Caco-2 (cell line): ENCODE measurements at regions of chr2 and their contacts with region 1.

Region 1: GRCh38 chr2:72745679-72746368 is 80.0 kb downstream of the EXOC6B start:
- DNase-seq: peak in 1 of 2 experiments; percentile 66
- H3K4me3 ChIP-seq: no peak overlapping the region
- H3K4me3 Mint-ChIP-seq: no peak overlapping the region
- H3K27ac Mint-ChIP-seq: no peak overlapping the region
- H3K4me1 ChIP-seq: peaks cover 18% of the 10 kb centered on the region
- H3K4me1 Mint-ChIP-seq: no peaks in the 10 kb centered on the region
- H3K27me3 ChIP-seq: no peaks in the 10 kb centered on the region
- H3K27me3 Mint-ChIP-seq: no peaks in the 10 kb centered on the region
- CTCF ChIP-seq: peak; percentile 73 to 77

Region 2: DNA sequence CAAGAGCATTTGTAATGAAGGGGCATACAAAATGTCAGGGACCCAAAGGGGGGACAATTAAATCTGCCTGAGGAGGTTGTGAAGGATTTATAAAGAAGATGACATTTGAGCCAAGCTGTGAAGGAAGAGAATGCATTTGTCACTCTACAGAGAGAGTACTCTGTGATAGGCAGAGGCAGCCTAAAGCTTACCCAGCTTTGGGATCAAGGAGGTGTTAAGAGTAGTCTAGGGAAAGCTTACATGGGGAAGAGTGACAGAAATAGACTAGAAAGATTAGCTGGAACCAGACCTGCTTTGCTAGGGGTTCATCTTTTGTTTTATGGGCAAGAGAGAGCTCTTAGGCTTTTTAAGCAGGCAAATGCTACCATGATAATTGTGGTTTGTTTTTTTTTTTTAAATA is 429.1 kb before region 1 on chr2:
- CTCF ChIA-PET with region 1: no interaction called
- POLR2A ChIA-PET with region 1: no interaction called
- intact Hi-C with region 1: loop called (anchors 5 kb)
- DNase-seq: no peak
- H3K4me3 ChIP-seq: no peak overlapping the region
- H3K4me3 Mint-ChIP-seq: no peak overlapping the region
- H3K27ac Mint-ChIP-seq: no peak overlapping the region
- H3K4me1 ChIP-seq: no peaks in the 10 kb centered on the region
- H3K4me1 Mint-ChIP-seq: no peaks in the 10 kb centered on the region
- H3K27me3 ChIP-seq: no peaks in the 10 kb centered on the region
- H3K27me3 Mint-ChIP-seq: no peaks in the 10 kb centered on the region
- CTCF ChIP-seq: no peak

Region 3: DNA sequence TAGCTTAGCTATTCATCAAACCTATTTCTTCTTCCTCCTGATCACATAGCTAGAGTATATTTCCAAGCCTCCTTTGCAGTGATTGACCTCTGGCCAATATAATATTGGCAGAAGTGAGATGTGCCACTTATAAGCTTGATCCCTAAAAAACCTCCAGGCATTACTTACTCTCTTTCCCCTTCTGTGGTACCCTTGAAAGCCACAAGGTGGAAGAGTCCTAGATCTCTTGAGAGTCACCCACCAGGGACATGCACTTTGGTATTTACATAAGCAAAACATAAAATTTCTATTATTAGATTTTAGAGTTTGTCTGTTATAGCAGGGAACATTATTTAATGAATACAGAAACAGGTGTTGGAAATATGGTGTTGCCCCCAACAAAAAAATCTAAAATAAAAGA is 32.0 kb before region 1 on chr2:
- CTCF ChIA-PET with region 1: no interaction called
- POLR2A ChIA-PET with region 1: no interaction called
- intact Hi-C with region 1: loop called (anchors 1 kb)
- DNase-seq: peak in 1 of 2 experiments; percentile 19
- H3K4me3 ChIP-seq: no peak overlapping the region
- H3K4me3 Mint-ChIP-seq: no peak overlapping the region
- H3K27ac Mint-ChIP-seq: no peak overlapping the region
- H3K4me1 ChIP-seq: peaks cover 7% of the 10 kb centered on the region; the same call in 1 of the 2 replicates
- H3K4me1 Mint-ChIP-seq: no peaks in the 10 kb centered on the region
- H3K27me3 ChIP-seq: no peaks in the 10 kb centered on the region
- H3K27me3 Mint-ChIP-seq: no peaks in the 10 kb centered on the region
- CTCF ChIP-seq: peak; percentile 30 to 51

Region 4: DNA sequence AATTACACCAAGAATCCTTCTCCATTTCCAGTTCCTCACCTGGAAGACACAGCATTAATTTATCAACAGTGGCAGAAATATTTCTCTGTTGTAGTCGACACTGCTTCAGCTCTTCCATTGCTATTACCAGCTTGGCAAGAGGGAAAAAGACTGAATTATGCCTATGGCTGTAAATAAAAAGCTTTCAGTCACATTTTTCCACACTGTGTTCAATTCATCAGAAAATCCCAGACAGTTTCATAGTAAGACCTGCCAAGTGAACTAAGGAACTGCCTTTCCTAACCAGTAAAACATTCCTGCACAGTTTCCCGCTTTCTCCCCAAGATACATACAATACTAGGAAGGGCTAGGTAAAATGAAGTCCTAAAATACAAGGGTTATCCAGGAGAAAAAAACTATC is 14.7 kb before region 1 on chr2:
- CTCF ChIA-PET with region 1: no interaction called
- POLR2A ChIA-PET with region 1: no interaction called
- intact Hi-C with region 1: no loop called
- DNase-seq: no peak
- H3K4me3 ChIP-seq: no peak overlapping the region
- H3K4me3 Mint-ChIP-seq: no peak overlapping the region
- H3K27ac Mint-ChIP-seq: no peak overlapping the region
- H3K4me1 ChIP-seq: no peaks in the 10 kb centered on the region
- H3K4me1 Mint-ChIP-seq: no peaks in the 10 kb centered on the region
- H3K27me3 ChIP-seq: no peaks in the 10 kb centered on the region
- H3K27me3 Mint-ChIP-seq: no peaks in the 10 kb centered on the region
- CTCF ChIP-seq: no peak

Region 5: GRCh38 chr2:73418343-73418742 is 672.5 kb after region 1 on chr2:
- CTCF ChIA-PET with region 1: no interaction called
- POLR2A ChIA-PET with region 1: no interaction called
- intact Hi-C with region 1: no loop called
- DNase-seq: no peak
- H3K4me3 ChIP-seq: no peak overlapping the region
- H3K4me3 Mint-ChIP-seq: no peak overlapping the region
- H3K27ac Mint-ChIP-seq: no peak overlapping the region
- H3K4me1 ChIP-seq: no peaks in the 10 kb centered on the region
- H3K4me1 Mint-ChIP-seq: no peaks in the 10 kb centered on the region
- H3K27me3 ChIP-seq: no peaks in the 10 kb centered on the region
- H3K27me3 Mint-ChIP-seq: no peaks in the 10 kb centered on the region
- CTCF ChIP-seq: no peak